ENCODE measurements at regions of chr2 and their contacts with region 1.

Region 1: DNA sequence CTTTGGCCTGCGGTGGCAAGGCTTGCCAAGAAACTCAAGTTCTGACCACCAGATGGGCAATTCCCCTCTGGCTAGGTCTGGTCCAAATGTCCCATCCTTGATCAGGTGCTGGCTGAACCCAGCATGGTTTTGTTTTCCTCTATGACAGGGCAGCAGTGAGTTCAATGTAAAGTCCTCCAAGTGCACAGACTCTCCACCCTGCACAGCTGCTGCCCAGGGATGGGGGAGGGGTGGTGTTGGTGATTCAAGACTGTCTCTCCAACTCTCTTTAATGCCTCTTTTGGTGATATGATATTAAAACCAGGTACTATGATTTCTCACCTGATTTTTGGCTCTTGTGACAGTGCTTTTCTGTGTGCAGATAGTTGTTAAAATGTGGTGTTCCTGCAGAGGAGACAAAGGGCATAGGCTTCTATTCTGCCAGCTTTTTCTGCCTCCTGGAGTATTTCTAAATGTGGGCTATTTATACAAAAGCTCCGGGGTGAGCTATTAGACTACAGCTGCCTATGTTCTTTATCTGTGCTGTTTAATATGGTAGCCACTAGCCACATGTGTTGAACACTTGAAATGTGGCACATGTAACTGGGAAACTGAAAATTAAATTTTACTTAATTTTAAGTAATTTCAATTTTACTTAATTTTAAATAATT is 64.0 kb upstream of the STK39 start:
- DNase-seq: no peak

Region 2: DNA sequence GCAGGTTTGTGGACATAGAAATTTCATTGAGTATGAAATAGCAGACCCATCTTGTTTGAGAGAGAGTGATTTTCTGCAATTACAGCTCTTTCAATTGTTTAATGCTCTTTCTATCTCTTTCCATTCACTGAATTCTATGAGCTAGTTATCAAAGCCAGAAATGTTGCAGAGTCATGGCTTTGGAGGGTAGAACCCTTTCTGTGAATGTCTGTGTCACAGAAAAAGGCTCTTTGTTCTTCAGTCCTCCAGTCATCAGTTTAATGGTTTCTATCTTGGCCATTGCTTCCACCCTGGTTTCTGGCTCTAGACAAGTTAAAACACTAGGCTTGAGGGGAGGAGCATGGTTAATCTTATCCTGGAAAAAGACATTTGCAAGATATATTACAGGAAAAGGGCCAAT is 718.9 kb before region 1 on chr2:
- intact Hi-C with region 1: no loop called
- DNase-seq: no peak

Region 3: DNA sequence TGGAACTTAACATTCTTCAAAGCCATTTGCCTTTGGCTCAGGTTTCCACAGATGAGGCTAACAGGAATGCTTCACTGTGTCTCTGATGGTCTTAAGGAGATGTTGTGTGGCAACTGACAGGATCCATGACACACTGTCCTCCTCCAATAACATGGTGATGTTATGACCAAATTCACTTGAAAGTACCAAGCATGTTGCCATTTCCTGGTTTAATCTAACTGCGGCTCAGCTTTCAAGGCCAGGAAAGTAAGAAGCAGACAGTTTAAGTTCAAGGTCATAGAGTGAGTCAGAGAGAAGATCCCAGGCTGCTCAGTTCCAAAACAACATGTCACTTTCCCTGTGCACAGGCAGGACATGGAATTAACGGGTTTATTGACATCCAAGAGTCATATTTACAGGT is 577.6 kb before region 1 on chr2:
- intact Hi-C with region 1: loop called in 1 of 2 experiments (anchors 5 kb)
- DNase-seq: no peak

Region 4: DNA sequence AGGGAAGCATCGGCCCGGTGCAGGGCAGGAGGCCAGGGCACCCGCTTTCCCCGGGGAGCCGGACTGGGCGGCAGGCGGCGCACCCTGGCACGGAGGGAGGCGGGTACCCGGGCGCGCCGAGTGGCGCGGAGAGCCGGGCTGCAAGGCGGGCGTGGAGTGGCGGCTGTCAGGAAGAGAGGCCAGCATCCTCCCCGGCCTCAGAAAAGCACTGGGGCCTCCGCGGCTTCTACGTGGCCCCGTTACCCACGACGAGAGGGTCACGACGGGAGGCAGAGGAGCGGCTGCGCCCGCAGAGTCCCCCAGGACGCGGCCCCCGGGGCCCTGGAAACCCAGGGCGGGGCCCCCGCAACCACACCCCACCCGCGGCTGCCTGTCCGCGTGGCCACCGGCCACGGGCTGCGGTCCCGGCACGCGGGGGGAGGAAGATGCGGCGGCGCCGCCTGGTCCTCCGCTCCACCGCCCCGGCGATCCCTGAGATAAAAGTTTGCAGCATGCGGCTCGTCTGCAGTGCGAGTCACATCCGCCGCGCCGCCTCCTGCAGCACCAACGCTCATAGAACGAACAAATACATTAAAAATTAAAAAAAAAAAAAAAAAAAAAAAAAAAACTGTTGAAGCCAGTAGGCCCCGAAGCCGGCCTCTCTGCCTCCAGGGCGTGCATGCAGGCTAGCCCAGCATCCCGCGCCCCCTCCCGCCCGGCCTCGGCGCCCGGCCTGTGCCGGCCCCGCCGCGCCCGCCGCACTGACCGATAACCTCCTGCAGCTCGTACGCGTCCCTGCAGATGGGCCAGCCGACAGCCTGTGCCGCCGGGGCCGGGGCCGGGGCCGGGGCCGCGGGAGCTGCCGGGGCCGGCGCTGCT is 64.7 kb before region 1 on chr2:
- intact Hi-C with region 1: no loop called
- DNase-seq: peak; percentile 90